Activated CD4-positive, alpha-beta T cell treated with anti-CD3 and anti-CD28 coated beads for 36 hours (primary cell): ENCODE measurements at regions of chr19 and their contacts with region 1.

Region 1: DNA sequence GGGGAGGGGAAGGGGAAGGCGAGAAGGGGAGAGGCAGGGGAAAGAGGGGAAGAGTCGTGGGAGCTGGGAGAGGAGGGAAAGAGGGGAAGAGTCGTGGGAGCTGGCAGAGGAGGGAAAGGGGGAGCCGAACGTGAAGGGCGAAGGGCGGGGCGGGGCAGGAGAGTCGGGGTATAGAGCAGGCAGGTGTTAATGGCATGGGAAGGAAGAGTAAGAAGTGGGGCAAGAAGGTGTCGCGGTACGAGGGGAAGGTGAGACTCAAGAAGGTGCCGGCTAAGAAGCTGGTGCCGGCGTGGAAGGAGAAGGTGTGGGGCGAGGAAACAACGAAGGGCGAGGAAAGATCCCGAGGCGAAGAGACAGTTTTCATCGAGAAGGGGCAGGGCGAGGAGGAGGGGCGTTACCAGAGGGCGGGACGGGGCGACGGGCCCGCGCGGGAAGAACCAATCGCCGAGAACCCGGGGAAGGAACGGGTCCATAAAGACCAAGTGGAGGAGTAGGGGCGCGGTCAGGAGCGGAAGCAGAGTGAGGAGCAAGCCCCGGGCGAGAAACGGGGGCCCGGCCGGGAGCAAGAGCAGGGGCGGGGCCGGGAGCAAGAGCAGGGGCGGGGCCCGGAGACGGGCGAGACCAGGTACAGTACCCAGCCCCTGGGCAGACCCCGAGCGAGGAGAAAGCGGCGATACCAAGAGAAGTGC is 463 bp downstream of the CATSPERG start:
- DNase-seq: peak; percentile 98
- ATAC-seq: peak; percentile 75
- H3K4me3 Mint-ChIP-seq: peak overlapping the region; percentile 82
- H3K27ac Mint-ChIP-seq: peak overlapping the region; percentile 98
- H3K4me1 Mint-ChIP-seq: peaks cover 12% of the 10 kb centered on the region
- H3K27me3 Mint-ChIP-seq: no peaks in the 10 kb centered on the region

Region 2: DNA sequence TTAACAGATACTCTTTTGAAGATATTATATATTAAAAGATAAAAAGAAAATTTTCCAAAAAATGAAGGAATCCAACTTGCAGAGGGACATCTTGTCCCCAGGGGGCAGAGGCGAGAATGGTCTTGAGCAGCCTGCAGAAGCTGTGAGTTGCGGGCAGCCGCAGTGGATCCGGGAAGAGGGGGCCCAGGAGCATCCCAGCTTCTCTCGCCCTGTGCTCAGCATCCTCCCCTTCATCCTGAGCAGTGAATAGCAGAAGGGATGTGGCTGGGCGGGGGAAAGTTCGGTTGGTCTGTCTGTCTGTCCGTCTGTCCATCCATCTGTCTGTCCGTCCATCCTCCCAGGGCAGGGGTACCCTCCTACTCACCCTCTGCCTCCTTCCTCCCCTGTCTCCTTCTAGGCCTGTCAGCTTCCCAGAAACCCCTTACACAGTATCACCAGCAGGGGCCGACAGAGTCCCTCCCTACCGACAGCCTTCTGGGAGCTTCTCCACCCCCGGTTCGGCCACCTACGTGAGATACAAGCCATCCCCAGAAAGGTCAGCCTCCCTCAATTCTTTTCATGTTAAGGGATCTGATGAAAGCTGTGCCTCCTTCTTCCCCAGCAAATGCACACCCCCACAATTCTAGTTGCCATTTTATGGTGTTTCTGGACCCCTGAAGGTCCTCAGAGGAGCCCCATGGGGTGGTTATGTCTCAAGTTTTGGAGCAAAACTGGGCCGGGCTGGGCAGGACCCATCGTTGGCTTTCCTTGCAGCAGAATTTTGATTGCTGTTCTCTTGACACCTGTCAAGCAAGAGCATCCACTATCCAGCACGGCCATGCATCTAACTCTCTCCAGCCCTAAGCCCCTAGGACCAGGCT is 193.7 kb before region 1 on chr19:
- CTCF ChIA-PET with region 1: no interaction called
- POLR2A ChIA-PET with region 1: no interaction called
- intact Hi-C with region 1: loop called in 1 of 2 experiments (anchors 1 kb)
- DNase-seq: peak; percentile 78
- ATAC-seq: peak; percentile 86
- H3K4me3 Mint-ChIP-seq: no peak overlapping the region
- H3K27ac Mint-ChIP-seq: no peak overlapping the region
- H3K4me1 Mint-ChIP-seq: peaks cover 3% of the 10 kb centered on the region
- H3K27me3 Mint-ChIP-seq: no peaks in the 10 kb centered on the region

Region 3: DNA sequence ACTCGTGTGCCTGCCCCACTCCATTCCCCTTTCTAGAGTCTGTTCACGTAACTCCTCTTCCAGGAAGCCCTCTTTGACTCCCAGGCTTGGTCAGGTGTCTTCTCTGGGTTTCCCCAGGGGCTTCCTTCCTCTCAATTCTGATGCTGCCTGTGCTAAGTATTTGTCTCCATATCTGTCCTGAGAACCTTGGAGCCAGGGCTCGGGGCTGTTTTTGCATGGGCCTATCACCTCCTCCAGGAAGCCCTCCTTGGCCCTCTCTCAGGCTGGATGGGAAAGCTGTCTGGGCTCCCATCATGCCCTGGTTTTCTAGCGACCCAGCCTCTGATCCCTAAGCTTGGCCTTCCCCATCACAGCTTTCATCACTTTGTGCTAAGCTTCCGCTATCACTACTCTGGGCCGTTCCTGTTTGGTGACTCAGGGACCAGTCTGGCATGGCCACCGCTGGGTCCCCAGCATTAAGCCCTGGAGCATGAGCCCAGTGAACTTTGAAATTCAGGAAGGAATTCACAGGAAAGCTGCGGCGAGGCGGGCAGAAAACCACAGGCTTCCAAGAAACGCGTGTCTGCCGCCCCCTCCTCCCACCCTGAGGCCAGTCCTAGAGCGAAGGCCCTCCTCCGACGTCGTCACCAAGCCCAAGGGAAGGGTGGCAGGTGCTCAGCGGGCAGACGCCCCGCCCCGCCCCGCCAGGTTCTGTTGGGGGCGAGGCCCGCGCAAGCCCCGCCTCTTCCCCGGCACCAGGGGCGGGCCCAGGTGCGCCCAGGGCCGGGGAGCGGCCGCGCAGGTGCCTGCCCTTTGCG is 72.2 kb before region 1 on chr19:
- CTCF ChIA-PET with region 1: no interaction called
- POLR2A ChIA-PET with region 1: no interaction called
- intact Hi-C with region 1: loop called (anchors 1 to 2 kb)
- DNase-seq: peak; percentile 90
- ATAC-seq: peak; percentile 87
- H3K4me3 Mint-ChIP-seq: peak overlapping the region; percentile 83
- H3K27ac Mint-ChIP-seq: peak overlapping the region; percentile 94
- H3K4me1 Mint-ChIP-seq: peaks cover 34% of the 10 kb centered on the region
- H3K27me3 Mint-ChIP-seq: no peaks in the 10 kb centered on the region

Region 4: DNA sequence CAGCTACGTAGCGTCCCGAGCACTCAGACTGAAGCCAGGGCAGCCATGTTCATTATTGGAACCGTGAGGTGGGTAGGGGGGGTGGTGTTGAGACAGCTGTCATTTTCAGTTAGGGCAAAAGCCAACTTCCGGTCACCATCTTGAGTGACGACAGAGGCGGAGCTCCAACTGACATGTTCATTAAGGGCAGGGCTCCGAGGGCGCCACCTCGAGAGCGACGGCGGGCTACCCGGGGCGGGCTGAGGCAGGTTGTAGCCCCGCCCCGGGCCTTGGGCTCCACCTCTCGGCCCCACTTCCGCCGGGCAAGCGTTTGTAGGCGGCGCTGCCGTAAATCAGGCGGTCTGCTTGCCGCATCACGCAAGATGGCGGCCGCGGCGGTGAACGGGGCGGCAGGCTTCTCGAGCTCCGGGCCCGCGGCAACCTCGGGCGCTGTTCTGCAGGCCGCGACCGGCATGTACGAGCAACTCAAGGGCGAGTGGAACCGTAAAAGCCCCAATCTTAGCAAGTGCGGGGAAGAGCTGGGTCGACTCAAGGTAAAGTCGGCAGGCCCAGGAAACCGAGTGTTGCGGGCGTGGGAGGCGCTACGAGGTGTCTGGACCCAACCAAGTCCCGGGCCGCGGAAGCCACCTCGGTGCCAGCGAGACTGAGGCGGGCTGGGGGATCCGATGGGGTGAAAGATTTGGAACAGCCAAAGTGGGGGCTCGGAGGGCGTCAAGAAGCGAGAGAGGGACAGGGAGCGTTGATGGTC is 38.5 kb after region 1 on chr19 and contains the start of gene PSMD8:
- CTCF ChIA-PET with region 1: interaction called, 11 read pairs
- POLR2A ChIA-PET with region 1: interaction called, 14 read pairs
- intact Hi-C with region 1: loop called (anchors 1 kb)
- DNase-seq: peak; percentile 99
- ATAC-seq: peak; percentile 99
- H3K4me3 Mint-ChIP-seq: peak within 1 kb of the TSS; percentile 97
- H3K27ac Mint-ChIP-seq: peak within 1 kb of the TSS; percentile 98
- H3K4me1 Mint-ChIP-seq: peaks cover 26% of the 10 kb centered on the region
- H3K27me3 Mint-ChIP-seq: peaks cover 5% of the 10 kb centered on the region
- total RNA-seq, gene PSMD8: 219 to 275 TPM

Region 5: GRCh38 chr19:38409631-38410133 is 73.6 kb after region 1 on chr19:
- CTCF ChIA-PET with region 1: no interaction called
- POLR2A ChIA-PET with region 1: no interaction called
- intact Hi-C with region 1: no loop called
- DNase-seq: no peak
- ATAC-seq: no peak
- H3K4me3 Mint-ChIP-seq: no peak overlapping the region
- H3K27ac Mint-ChIP-seq: no peak overlapping the region
- H3K4me1 Mint-ChIP-seq: peaks cover 5% of the 10 kb centered on the region
- H3K27me3 Mint-ChIP-seq: no peaks in the 10 kb centered on the region

Region 6: DNA sequence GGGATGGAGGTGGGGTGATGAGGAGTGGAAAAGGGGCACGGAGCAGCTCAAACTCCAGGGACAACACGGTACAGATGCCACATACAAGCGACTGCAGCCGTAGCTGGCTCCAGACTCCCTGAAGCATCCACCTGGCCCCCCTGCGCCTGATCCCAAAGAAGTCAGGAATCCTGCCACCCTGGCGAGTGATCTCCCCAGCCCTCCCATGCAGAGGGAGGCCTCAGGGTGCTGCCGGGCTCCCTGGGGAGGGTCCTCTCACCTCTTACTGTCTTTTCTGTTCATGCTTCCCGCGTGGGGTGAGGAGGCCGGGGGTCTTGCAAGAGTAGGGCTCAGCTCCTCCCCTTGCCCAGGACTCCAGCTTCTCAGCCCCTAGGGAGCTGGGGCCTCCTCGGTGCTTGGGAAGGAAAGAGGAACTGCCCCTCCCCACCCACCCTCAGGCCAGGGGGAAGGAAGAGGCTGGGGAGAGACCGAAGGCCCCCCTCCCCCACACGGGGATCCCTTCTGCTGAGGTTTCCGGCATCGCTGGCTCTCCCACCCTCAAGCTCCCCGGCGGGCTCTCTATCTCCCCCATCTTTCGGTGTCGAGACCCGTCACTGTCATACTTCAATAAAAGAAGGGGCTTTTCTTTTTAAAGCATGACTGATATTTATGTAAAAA is 89.8 kb after region 1 on chr19 and contains the start of gene RASGRP4:
- CTCF ChIA-PET with region 1: no interaction called
- POLR2A ChIA-PET with region 1: no interaction called
- intact Hi-C with region 1: loop called in 1 of 2 experiments (anchors 1 kb)
- DNase-seq: peak; percentile 78
- ATAC-seq: peak; percentile 27
- H3K4me3 Mint-ChIP-seq: peak within 1 kb of the TSS; percentile 60
- H3K27ac Mint-ChIP-seq: peak within 1 kb of the TSS; percentile 90
- H3K4me1 Mint-ChIP-seq: peaks cover 33% of the 10 kb centered on the region
- H3K27me3 Mint-ChIP-seq: no peaks in the 10 kb centered on the region
- total RNA-seq, gene RASGRP4: 5.6 to 5.9 TPM

Region 7: DNA sequence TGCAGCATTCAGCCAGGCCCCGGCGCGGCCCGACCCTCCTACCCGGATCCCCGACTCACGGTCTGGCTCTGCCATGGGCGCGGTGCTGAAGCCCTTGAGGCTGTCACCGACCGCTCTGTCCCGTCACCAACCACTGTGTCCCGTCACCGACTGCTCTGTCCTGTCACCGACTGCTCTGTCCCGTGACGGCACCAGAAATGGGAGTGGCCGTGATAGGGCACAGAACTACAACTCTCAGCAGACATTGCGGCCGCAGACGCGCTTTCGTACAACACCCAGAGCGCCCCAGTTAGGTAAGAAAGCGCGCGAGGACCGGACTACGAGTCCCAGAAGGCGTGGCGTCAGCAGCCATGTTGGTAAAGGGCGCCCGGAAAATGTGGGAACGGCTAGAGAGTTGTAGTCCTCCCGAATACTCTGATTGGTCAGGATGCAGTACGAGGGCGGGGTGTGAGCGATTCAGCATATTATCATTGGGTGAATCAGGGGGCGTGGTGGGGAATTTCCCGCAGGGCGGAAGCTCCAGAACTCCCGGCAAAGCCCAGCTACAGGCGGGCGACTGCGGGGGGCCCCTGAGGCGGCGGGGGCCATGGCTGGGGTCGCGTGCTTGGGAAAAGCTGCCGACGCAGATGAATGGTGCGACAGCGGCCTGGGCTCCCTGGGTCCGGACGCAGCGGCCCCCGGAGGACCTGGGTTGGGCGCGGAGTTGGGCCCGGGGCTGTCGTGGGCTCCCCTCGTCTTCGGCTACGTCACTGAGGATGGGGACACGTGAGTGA is 563.5 kb after region 1 on chr19 and contains the starts of genes NFKBIB and SIRT2:
- CTCF ChIA-PET with region 1: no interaction called
- POLR2A ChIA-PET with region 1: no interaction called
- intact Hi-C with region 1: loop called in 1 of 2 experiments (anchors 1 kb)
- DNase-seq: peak; percentile 100
- ATAC-seq: peak; percentile 93
- H3K4me3 Mint-ChIP-seq: peak within 1 kb of the TSS; percentile 88
- H3K27ac Mint-ChIP-seq: peak within 1 kb of the TSS; percentile 91
- H3K4me1 Mint-ChIP-seq: peaks cover 40% of the 10 kb centered on the region
- H3K27me3 Mint-ChIP-seq: no peaks in the 10 kb centered on the region
- total RNA-seq, gene NFKBIB: 49.4 to 52.5 TPM
- total RNA-seq, gene SIRT2: 17.8 to 23.1 TPM